Panc1 (cell line): ENCODE measurements at regions of chr3 and their contacts with region 1.

Region 1: GRCh38 chr3:191085091-191085490 is 114.0 kb upstream of the OSTN start:
- DNase-seq: no peak
- ATAC-seq: no peak
- H3K4me3 ChIP-seq: no peak overlapping the region
- H3K27ac ChIP-seq: no peak overlapping the region
- H3K4me1 ChIP-seq: no peaks in the 10 kb centered on the region
- H3K27me3 ChIP-seq: no peaks in the 10 kb centered on the region
- CTCF ChIP-seq: no peak

Region 2: GRCh38 chr3:190130037-190130436 is 955.1 kb before region 1 on chr3:
- CTCF ChIA-PET with region 1: no interaction called
- POLR2A ChIA-PET with region 1: interaction called, 10 read pairs
- in situ Hi-C with region 1: no loop called
- intact Hi-C with region 1: no loop called
- DNase-seq: no peak
- ATAC-seq: no peak
- H3K4me3 ChIP-seq: no peak overlapping the region
- H3K27ac ChIP-seq: no peak overlapping the region
- H3K4me1 ChIP-seq: no peaks in the 10 kb centered on the region
- H3K27me3 ChIP-seq: no peaks in the 10 kb centered on the region
- CTCF ChIP-seq: no peak